Naive thymus-derived CD4-positive, alpha-beta T cell (primary cell): ENCODE measurements at regions of chr14 and their contacts with region 1.

Region 1: GRCh38 chr14:73633116-73634010 is 11.4 kb upstream of the DNAL1 start:
- DNase-seq: peak; percentile 17 to 65 (median 58)
- ATAC-seq: peak; percentile 89
- H3K4me3 ChIP-seq: peak overlapping the region; percentile 56
- H3K4me3 Mint-ChIP-seq: peak overlapping the region; percentile 59 to 86 (median 78)
- H3K27ac ChIP-seq: peak overlapping the region; percentile 42
- H3K27ac Mint-ChIP-seq: peak overlapping the region in 2 of 9 donors; percentile 46 to 69
- H3K4me1 ChIP-seq: no peaks in the 10 kb centered on the region
- H3K4me1 Mint-ChIP-seq: peaks cover 0 to 7% (median 5%) of the 10 kb centered on the region in 7 donors
- H3K27me3 ChIP-seq: no peaks in the 10 kb centered on the region
- H3K27me3 Mint-ChIP-seq: peaks cover 8 to 42% (median 11%) of the 10 kb centered on the region in 5 donors

Region 2: GRCh38 chr14:73173092-73173735 is 460.1 kb before region 1 on chr14:
- CTCF ChIA-PET with region 1: no interaction called
- POLR2A ChIA-PET with region 1: no interaction called
- intact Hi-C with region 1: loop called in 1 of 2 experiments (anchors 2 kb)
- DNase-seq: peak in 5 of 9 donors; percentile 4 to 25 (median 8)
- ATAC-seq: peak; percentile 57
- H3K4me3 ChIP-seq: no peak overlapping the region
- H3K4me3 Mint-ChIP-seq: no peak overlapping the region
- H3K27ac ChIP-seq: no peak overlapping the region
- H3K27ac Mint-ChIP-seq: peak overlapping the region in 3 of 9 donors; percentile 21 to 25 (median 24)
- H3K4me1 ChIP-seq: no peaks in the 10 kb centered on the region
- H3K4me1 Mint-ChIP-seq: peaks cover 0 to 9% (median 0%) of the 10 kb centered on the region in 7 donors
- H3K27me3 ChIP-seq: no peaks in the 10 kb centered on the region
- H3K27me3 Mint-ChIP-seq: no peaks in the 10 kb centered on the region

Region 3: DNA sequence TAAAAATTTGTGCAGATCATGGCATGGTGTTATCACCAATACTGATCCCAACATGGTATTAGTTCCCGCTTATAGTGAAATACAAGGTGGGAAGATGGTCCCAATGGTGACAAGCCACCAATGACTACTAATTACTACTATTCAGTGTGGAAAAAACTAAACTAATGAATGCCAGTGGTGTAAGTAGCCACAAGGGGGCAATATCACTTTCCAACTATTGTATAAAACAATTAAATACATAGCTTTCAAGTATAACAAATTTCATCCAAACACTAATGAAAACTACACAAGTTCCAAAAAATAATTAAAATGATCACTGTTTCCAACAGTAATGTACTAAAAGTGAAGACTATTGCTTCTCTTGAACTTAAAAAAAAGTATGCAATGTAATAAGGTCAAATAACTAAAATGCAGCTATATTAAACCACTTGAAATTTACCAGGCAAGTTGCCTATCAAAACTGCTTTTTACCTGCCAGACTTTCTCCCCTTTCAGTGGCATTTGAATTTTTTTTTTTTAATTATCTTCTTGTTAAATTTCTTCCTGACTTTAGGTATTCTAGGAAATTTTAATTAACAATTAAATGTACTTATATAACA is 338.1 kb before region 1 on chr14:
- CTCF ChIA-PET with region 1: interaction called, 4 read pairs
- POLR2A ChIA-PET with region 1: no interaction called
- intact Hi-C with region 1: loop called in 1 of 2 experiments (anchors 1 kb)
- DNase-seq: peak in 5 of 9 donors; percentile 27 to 53 (median 43)
- ATAC-seq: peak; percentile 70
- H3K4me3 ChIP-seq: no peak overlapping the region
- H3K4me3 Mint-ChIP-seq: no peak overlapping the region
- H3K27ac ChIP-seq: no peak overlapping the region
- H3K27ac Mint-ChIP-seq: no peak overlapping the region
- H3K4me1 ChIP-seq: no peaks in the 10 kb centered on the region
- H3K4me1 Mint-ChIP-seq: peaks cover 0 to 18% (median 0%) of the 10 kb centered on the region in 7 donors
- H3K27me3 ChIP-seq: no peaks in the 10 kb centered on the region
- H3K27me3 Mint-ChIP-seq: no peaks in the 10 kb centered on the region

Region 4: DNA sequence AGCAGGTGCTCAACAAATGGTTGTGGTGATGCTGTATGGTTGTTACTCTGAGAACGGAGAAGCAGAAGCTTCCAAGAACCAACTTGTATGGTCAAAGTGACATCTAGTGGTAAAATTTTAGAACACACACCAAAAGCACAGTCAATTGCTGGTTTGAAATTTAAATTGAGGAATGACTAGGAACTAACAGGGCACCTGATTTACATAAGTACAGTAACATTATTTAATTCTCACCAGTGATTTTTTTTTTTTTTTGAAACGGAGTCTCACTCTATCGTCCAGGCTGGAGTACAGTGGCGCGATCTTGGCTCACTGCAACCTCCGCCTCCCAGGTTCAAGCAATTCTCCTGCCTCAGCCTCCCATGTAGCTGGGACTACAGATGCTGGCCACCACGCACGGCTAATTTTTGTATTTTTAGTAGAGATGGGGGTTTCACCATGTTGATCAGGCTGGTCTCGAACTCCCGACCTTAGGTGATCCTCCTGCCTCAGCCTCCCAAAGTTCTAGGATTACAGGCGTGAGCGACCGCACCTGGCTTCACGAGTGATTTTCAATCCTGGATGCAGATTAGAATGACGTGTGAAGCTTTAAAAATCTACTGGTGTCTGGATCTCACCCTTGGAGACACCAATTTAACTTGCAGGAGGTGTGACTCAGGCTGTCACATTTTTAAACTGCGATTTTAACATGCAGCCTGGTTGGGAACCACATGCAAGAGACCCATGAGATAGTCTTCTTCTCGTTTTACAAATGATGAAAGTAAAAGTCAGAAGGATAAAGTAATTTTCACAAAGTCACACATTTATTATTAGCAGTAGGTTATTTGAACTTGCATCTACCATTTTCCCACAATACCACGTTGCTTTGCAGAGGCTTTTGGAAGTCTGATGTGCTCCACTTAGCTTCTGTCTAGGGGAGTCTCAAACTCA is 160.9 kb before region 1 on chr14:
- CTCF ChIA-PET with region 1: no interaction called
- POLR2A ChIA-PET with region 1: no interaction called
- intact Hi-C with region 1: loop called in 1 of 2 experiments (anchors 1 kb)
- DNase-seq: peak in 7 of 9 donors; percentile 37 to 71 (median 54)
- ATAC-seq: peak; percentile 84
- H3K4me3 ChIP-seq: no peak overlapping the region
- H3K4me3 Mint-ChIP-seq: no peak overlapping the region
- H3K27ac ChIP-seq: no peak overlapping the region
- H3K27ac Mint-ChIP-seq: no peak overlapping the region
- H3K4me1 ChIP-seq: no peaks in the 10 kb centered on the region
- H3K4me1 Mint-ChIP-seq: peaks cover 0 to 11% (median 4%) of the 10 kb centered on the region in 7 donors
- H3K27me3 ChIP-seq: no peaks in the 10 kb centered on the region
- H3K27me3 Mint-ChIP-seq: no peaks in the 10 kb centered on the region

Region 5: DNA sequence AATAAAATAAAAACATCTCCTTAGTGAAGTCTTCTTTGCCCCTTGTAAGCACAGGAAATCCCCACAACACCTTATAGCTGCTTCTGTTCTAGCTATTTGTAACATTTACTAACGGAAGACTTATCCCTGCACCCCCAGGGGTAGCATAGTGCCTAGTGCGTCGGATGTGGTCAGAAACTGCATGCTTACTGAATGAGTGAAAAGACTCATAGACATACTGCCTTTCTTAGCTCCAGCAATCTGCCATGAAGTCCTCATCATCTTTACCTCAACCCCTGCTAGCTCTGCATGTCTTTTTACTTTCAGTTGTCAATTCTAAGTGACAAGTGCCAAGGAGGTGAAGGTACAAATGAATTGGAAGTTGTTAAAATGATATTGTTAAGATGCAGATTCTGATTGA is 129.7 kb before region 1 on chr14:
- CTCF ChIA-PET with region 1: interaction called, 43 read pairs
- POLR2A ChIA-PET with region 1: interaction called, 4 read pairs
- intact Hi-C with region 1: loop called (anchors 1 kb)
- DNase-seq: no peak
- ATAC-seq: peak; percentile 41
- H3K4me3 ChIP-seq: no peak overlapping the region
- H3K4me3 Mint-ChIP-seq: no peak overlapping the region
- H3K27ac ChIP-seq: no peak overlapping the region
- H3K27ac Mint-ChIP-seq: no peak overlapping the region
- H3K4me1 ChIP-seq: no peaks in the 10 kb centered on the region
- H3K4me1 Mint-ChIP-seq: peaks cover 0 to 5% (median 0%) of the 10 kb centered on the region in 7 donors
- H3K27me3 ChIP-seq: no peaks in the 10 kb centered on the region
- H3K27me3 Mint-ChIP-seq: no peaks in the 10 kb centered on the region

Region 6: GRCh38 chr14:73591690-73592448 is 41.5 kb before region 1 on chr14 and contains the start of gene ACOT4:
- CTCF ChIA-PET with region 1: no interaction called
- POLR2A ChIA-PET with region 1: no interaction called
- intact Hi-C with region 1: loop called in 1 of 2 experiments (anchors 1 kb)
- DNase-seq: peak; percentile 43 to 77 (median 73)
- ATAC-seq: peak; percentile 93
- H3K4me3 ChIP-seq: peak within 1 kb of the TSS; percentile 74
- H3K4me3 Mint-ChIP-seq: peak within 1 kb of the TSS; percentile 61 to 87 (median 79)
- H3K27ac ChIP-seq: peak within 1 kb of the TSS; percentile 63
- H3K27ac Mint-ChIP-seq: peak within 1 kb of the TSS in 8 of 9 donors; percentile 29 to 89 (median 70)
- H3K4me1 ChIP-seq: no peaks in the 10 kb centered on the region
- H3K4me1 Mint-ChIP-seq: peaks cover 0 to 19% (median 5%) of the 10 kb centered on the region in 7 donors
- H3K27me3 ChIP-seq: no peaks in the 10 kb centered on the region
- H3K27me3 Mint-ChIP-seq: peaks cover 0 to 10% (median 0%) of the 10 kb centered on the region in 5 donors
- total RNA-seq, gene ACOT4: 0.69 to 1.0 (median 0.89) TPM

Region 7: GRCh38 chr14:73613046-73613383 is 20.3 kb before region 1 on chr14:
- CTCF ChIA-PET with region 1: interaction called, 3 read pairs
- POLR2A ChIA-PET with region 1: no interaction called
- intact Hi-C with region 1: loop called in 1 of 2 experiments (anchors 1 kb)
- DNase-seq: no peak
- ATAC-seq: no peak
- H3K4me3 ChIP-seq: peak overlapping the region; percentile 73
- H3K4me3 Mint-ChIP-seq: peak overlapping the region; percentile 82 to 90 (median 88)
- H3K27ac ChIP-seq: peak overlapping the region; percentile 65
- H3K27ac Mint-ChIP-seq: peak overlapping the region; percentile 72 to 90 (median 84)
- H3K4me1 ChIP-seq: no peaks in the 10 kb centered on the region
- H3K4me1 Mint-ChIP-seq: peaks cover 0 to 14% (median 0%) of the 10 kb centered on the region in 7 donors
- H3K27me3 ChIP-seq: no peaks in the 10 kb centered on the region
- H3K27me3 Mint-ChIP-seq: peaks cover 0 to 10% (median 0%) of the 10 kb centered on the region in 5 donors